Endothelial cell of umbilical vein (primary cell): ENCODE measurements at regions of chr6 and their contacts with region 1.

Region 1: DNA sequence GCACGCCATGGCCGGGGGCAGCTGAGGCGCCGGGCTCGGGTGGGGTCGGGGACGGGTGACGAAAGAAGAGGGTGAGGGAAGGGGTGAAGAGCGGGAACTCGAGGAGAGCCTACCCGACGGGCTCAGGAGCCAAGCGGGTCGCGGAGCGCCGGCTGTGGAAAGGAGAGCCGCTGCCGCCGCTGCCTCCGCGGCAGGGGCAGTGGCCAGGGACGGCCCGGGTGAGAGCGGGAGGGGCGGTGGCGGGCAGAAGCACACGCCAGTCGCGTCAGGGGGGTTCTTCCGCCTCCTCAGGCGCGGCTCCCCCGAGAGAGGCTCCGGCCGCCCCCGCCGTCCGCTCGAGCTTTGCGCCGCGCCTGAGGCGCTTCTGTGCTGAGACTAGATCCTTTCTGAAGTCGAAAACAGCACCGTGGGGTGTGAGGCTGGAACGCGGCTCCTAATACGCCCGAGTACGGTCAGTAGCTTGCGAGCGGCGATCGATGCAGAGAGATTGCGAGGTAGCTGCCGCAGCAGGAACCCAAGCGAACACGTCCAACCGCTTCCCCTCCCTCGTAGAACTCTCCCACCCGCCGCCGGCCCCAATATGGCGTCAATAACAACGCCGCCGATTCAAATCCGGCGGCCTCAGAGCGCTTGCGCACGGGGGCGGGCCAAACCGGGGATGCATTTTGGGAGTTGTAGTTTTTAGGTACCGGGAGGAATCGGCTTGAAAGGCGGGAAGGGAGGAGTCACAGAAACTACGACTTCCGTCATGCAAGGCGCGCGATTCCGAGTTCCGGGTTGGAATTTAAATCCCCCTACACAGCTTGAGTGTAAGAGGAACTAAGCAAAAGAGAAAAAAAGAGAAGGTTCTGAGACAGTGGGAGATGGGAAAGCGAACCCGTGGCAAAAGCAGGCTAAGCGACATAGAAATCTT is at the start of gene AKIRIN2:
- DNase-seq: peak; percentile 100
- H3K4me3 ChIP-seq: peak within 1 kb of the TSS; percentile 95 to 100 (median 97)
- H3K27ac ChIP-seq: peak within 1 kb of the TSS; percentile 62
- H3K4me1 ChIP-seq: peaks cover 30% of the 10 kb centered on the region
- H3K27me3 ChIP-seq: no peaks in the 10 kb centered on the region
- CTCF ChIP-seq: no peak
- POLR2A ChIP-seq: peak; percentile 92
- total RNA-seq, gene AKIRIN2: 46.1 and 46.4 TPM in 2 replicates

Region 2: GRCh38 chr6:87407901-87408720 is 293.8 kb before region 1 on chr6 and contains the start of gene CFAP206:
- CTCF ChIA-PET with region 1: no interaction called
- POLR2A ChIA-PET with region 1: interaction called, 3 read pairs
- dilution Hi-C with region 1: no loop called
- intact Hi-C with region 1: loop called (anchors 1 kb)
- DNase-seq: peak; percentile 95
- H3K4me3 ChIP-seq: peak within 1 kb of the TSS; percentile 87 to 97 (median 96)
- H3K27ac ChIP-seq: peak within 1 kb of the TSS; percentile 48
- H3K4me1 ChIP-seq: peaks cover 10% of the 10 kb centered on the region
- H3K27me3 ChIP-seq: peaks cover 0 to 5% of the 10 kb centered on the region in 2 experiments
- CTCF ChIP-seq: peak in 1 of 2 donors; percentile 15
- POLR2A ChIP-seq: no peak
- total RNA-seq, gene CFAP206: 0.20 and 0.21 TPM in 2 replicates

Region 3: GRCh38 chr6:87540539-87540938 is 161.4 kb before region 1 on chr6:
- CTCF ChIA-PET with region 1: no interaction called
- POLR2A ChIA-PET with region 1: no interaction called
- dilution Hi-C with region 1: no loop called
- intact Hi-C with region 1: loop called (anchors 1 kb)
- DNase-seq: peak; percentile 89
- H3K4me3 ChIP-seq: no peak overlapping the region
- H3K27ac ChIP-seq: no peak overlapping the region
- H3K4me1 ChIP-seq: no peaks in the 10 kb centered on the region
- H3K27me3 ChIP-seq: no peaks in the 10 kb centered on the region
- CTCF ChIP-seq: no peak
- POLR2A ChIP-seq: no peak

Region 4: DNA sequence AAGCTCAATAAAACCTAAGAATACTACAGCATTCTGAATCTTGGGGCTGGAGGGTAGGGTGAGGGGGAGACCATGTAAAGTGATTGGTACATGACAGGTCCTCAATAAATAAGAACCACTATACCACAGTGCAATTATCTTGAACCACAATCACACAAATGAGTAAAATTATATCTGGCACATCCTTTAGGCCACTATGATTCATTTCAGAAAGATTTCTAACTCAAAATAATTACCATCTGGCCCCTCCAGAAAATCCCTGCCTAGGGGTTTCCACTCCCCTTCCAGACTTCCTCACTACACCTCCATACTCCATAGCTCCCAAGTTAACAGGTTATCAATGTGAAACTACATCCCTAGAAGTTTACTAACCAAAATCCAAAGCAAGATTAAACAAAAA is 19.6 kb before region 1 on chr6:
- CTCF ChIA-PET with region 1: interaction called, 18 read pairs
- POLR2A ChIA-PET with region 1: interaction called, 11 read pairs
- dilution Hi-C with region 1: no loop called
- intact Hi-C with region 1: no loop called
- DNase-seq: no peak
- H3K4me3 ChIP-seq: no peak overlapping the region
- H3K27ac ChIP-seq: no peak overlapping the region
- H3K4me1 ChIP-seq: no peaks in the 10 kb centered on the region
- H3K27me3 ChIP-seq: no peaks in the 10 kb centered on the region
- CTCF ChIP-seq: no peak
- POLR2A ChIP-seq: no peak